ENCODE measurements at regions of chr2 and their contacts with region 1.

Region 1: GRCh38 chr2:222318026-222318711 is 19.4 kb upstream of the PAX3 start:
- DNase-seq: peak; percentile 43
- H3K4me3 Mint-ChIP-seq: peak overlapping the region; percentile 86
- H3K27ac Mint-ChIP-seq: no peak overlapping the region
- H3K4me1 Mint-ChIP-seq: peaks cover 17% of the 10 kb centered on the region
- H3K27me3 Mint-ChIP-seq: peaks cover 57% of the 10 kb centered on the region

Region 2: GRCh38 chr2:222298311-222299150 is 19.6 kb before region 1 on chr2 and contains the start of gene PAX3:
- intact Hi-C with region 1: loop called (anchors 2 kb)
- DNase-seq: no peak
- H3K4me3 Mint-ChIP-seq: no peak within 1 kb of the TSS
- H3K27ac Mint-ChIP-seq: peak within 1 kb of the TSS; percentile 77
- H3K4me1 Mint-ChIP-seq: peaks cover 5% of the 10 kb centered on the region
- H3K27me3 Mint-ChIP-seq: peaks cover 88% of the 10 kb centered on the region
- total RNA-seq, gene PAX3: not detected in 2 replicates

Region 3: GRCh38 chr2:222424729-222425671 is 106.8 kb after region 1 on chr2:
- intact Hi-C with region 1: loop called (anchors 1 kb)
- DNase-seq: peak; percentile 24
- H3K4me3 Mint-ChIP-seq: peak overlapping the region; percentile 95
- H3K27ac Mint-ChIP-seq: peak overlapping the region; percentile 92
- H3K4me1 Mint-ChIP-seq: peaks cover 60% of the 10 kb centered on the region
- H3K27me3 Mint-ChIP-seq: peaks cover 13% of the 10 kb centered on the region

Region 4: GRCh38 chr2:222613715-222614331 is 295.7 kb after region 1 on chr2:
- intact Hi-C with region 1: loop called (anchors 1 kb)
- DNase-seq: no peak
- H3K4me3 Mint-ChIP-seq: no peak overlapping the region
- H3K27ac Mint-ChIP-seq: no peak overlapping the region
- H3K4me1 Mint-ChIP-seq: peaks cover 8% of the 10 kb centered on the region
- H3K27me3 Mint-ChIP-seq: no peaks in the 10 kb centered on the region

Region 5: GRCh38 chr2:222690564-222691200 is 372.5 kb after region 1 on chr2:
- intact Hi-C with region 1: loop called (anchors 5 kb)
- DNase-seq: peak; percentile 59
- H3K4me3 Mint-ChIP-seq: no peak overlapping the region
- H3K27ac Mint-ChIP-seq: no peak overlapping the region
- H3K4me1 Mint-ChIP-seq: peaks cover 5% of the 10 kb centered on the region
- H3K27me3 Mint-ChIP-seq: peaks cover 8% of the 10 kb centered on the region